GM12878 (cell line): ENCODE measurements at regions of chr2 and their contacts with region 1.

Region 1: GRCh38 chr2:178946494-178946893 is 103.4 kb downstream of the CCDC141 start:
- DNase-seq: no peak
- ATAC-seq: no peak
- H3K4me3 ChIP-seq: no peak overlapping the region
- H3K27ac ChIP-seq: no peak overlapping the region
- H3K4me1 ChIP-seq: no peaks in the 10 kb centered on the region
- H3K27me3 ChIP-seq: no peaks in the 10 kb centered on the region
- CTCF ChIP-seq: no peak
- EP300 ChIP-seq: no peak
- POLR2A ChIP-seq: no peak
- RAD21 ChIP-seq: no peak

Region 2: DNA sequence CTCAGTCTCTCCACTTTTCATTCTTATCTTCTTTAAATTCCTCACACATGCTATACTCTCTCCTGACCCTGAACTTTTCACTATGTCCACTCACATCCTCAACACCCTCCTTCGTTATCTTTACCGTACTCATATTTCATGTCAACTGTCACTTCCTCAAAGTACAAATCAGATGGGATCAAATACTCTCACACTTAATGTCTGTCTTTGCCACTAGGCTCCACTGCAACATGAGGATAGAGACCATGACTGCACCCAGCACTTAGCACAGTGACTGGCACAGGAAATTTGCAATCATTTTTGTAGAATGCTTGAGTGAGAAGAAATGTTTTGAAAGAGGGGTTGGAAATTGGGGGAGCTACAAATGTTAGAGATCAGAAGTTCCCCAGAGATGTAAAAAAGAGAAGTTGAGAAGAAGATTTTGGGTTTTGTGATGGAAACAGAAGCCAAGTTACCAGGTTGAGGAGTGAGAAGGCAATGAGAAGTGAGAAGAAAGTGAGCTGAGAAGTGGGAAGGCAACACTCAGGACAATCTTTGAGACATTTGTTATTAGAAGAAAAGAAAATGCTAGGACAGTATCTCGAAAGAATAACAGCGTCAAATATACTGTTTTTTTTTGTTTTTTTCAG is 16.4 kb after region 1 on chr2:
- CTCF ChIA-PET with region 1: interaction called, 4 read pairs
- POLR2A ChIA-PET with region 1: interaction called, 3 read pairs
- RAD21 ChIA-PET with region 1: no interaction called
- SMC1A ChIA-PET with region 1: interaction called, 10 read pairs
- in situ Hi-C with region 1: no loop called
- intact Hi-C with region 1: no loop called
- DNase-seq: no peak
- ATAC-seq: no peak
- H3K4me3 ChIP-seq: no peak overlapping the region
- H3K27ac ChIP-seq: no peak overlapping the region
- H3K4me1 ChIP-seq: no peaks in the 10 kb centered on the region
- H3K27me3 ChIP-seq: no peaks in the 10 kb centered on the region
- CTCF ChIP-seq: no peak
- EP300 ChIP-seq: no peak
- POLR2A ChIP-seq: no peak
- RAD21 ChIP-seq: no peak